ENCODE measurements at regions of chr12 and their contacts with region 1.

Region 1: GRCh38 chr12:39764944-39765560 is 145.4 kb upstream of the ABCD2 start:
- DNase-seq: no peak
- CTCF ChIP-seq: peak; percentile 70

Region 2: GRCh38 chr12:40107098-40107802 is 342.2 kb after region 1 on chr12:
- in situ Hi-C with region 1: loop called (anchors 25 kb)
- DNase-seq: peak; percentile 68
- CTCF ChIP-seq: peak; percentile 90

Measured in GM13976 (cell line).